ENCODE measurements at regions of chr17 and their contacts with region 1.

Region 1: GRCh38 chr17:66841328-66841727 is 6.4 kb downstream of the CACNG5 start:
- DNase-seq: no peak
- ATAC-seq: no peak
- H3K4me3 ChIP-seq: no peak overlapping the region
- H3K27ac ChIP-seq: no peak overlapping the region
- H3K4me1 ChIP-seq: no peaks in the 10 kb centered on the region
- H3K27me3 ChIP-seq: peaks cover 40% of the 10 kb centered on the region
- CTCF ChIP-seq: no peak
- POLR2A ChIP-seq: no peak
- RAD21 ChIP-seq: no peak

Region 2: DNA sequence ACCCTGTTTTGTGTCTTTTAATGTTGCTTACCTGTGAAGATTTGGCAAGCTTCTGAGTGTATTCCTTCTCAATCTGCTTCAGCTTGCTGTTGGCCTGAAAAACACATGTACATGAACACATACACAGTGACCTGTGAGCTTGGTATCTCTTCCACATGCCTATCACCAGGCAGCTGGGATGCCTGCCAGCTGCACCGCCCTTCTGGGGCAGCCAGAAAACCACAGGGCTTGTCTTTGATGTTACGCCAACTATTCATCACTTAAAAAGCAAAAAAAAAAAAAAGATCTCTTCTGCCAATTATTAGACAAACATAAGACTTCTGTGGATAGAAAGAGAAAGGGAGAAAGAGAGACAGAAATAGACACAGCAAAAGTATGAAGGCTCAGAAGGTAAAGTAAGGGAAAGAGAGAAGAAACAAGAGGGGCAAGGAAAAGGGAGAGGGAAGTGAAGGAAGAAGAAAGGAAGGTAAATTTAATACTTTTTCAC is 1090.7 kb before region 1 on chr17:
- CTCF ChIA-PET with region 1: no interaction called
- POLR2A ChIA-PET with region 1: no interaction called
- dilution Hi-C with region 1: no loop called
- in situ Hi-C with region 1: no loop called
- intact Hi-C with region 1: loop called (anchors 10 kb)
- DNase-seq: peak; percentile 89
- ATAC-seq: peak; percentile 80
- H3K4me3 ChIP-seq: no peak overlapping the region
- H3K27ac ChIP-seq: no peak overlapping the region
- H3K4me1 ChIP-seq: peaks cover 2% of the 10 kb centered on the region; the same call in 1 of the 2 replicates
- H3K27me3 ChIP-seq: peaks cover 3% of the 10 kb centered on the region
- CTCF ChIP-seq: no peak
- POLR2A ChIP-seq: no peak
- RAD21 ChIP-seq: no peak